ENCODE measurements at regions of chr4 and their contacts with region 1.

Region 1: GRCh38 chr4:128287871-128288688 is 467 bp upstream of the PGRMC2 start:
- DNase-seq: peak; percentile 96 to 99 (median 98)

Region 2: GRCh38 chr4:128310266-128310697 is 22.2 kb after region 1 on chr4:
- intact Hi-C with region 1: no loop called
- DNase-seq: no peak

Region 3: DNA sequence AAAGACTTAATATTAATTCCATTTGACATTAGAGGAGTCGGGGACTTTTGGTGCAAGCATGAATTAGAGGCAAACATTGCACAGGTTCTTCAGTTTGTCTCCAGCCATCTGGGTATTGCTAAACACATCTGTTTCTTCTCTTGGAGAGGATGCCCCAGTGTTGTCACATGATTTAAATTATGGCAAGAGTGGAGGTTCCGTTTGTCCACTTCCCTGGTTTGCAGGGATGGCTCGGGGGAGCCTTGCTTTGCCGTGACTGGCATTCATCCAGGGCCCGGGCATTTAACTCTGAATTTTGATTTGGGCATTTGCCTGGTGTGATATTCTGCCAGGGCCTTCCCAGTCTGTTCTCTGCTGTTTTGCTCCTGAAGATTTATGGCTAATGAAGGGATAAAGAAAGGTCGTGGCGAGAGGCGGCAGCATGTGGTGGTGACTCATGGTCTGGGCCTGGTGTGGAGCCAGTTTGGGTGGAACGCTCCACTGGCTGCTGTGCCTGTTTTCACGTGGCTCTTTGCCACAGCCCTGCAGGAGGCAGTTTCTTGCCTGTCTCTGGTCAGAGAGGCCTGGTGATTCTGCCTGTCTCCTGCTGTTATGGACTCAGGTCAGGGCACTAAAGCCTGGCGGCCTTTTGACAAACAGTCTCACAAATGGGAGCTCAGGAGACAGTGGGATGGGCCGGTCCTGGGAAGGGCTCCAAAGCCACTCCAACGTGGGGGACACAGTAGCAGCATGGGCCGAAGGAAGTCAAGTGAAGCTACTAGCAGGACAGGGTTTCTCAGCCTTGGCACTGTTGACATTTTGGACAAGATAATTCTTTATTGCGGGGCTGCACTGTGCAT is 98.9 kb after region 1 on chr4:
- intact Hi-C with region 1: loop called (anchors 5 kb)
- DNase-seq: peak; percentile 75 to 96 (median 80)

Region 4: GRCh38 chr4:129093191-129093920 is 805.3 kb after region 1 on chr4 and contains the start of gene SCLT1:
- intact Hi-C with region 1: loop called (anchors 5 kb)
- DNase-seq: peak; percentile 95 to 100 (median 98)